ENCODE measurements at regions of chr11 and their contacts with region 1.

Region 1: GRCh38 chr11:207208-207862 is at the starts of genes BET1L and RIC8A:
- H3K4me3 ChIP-seq: peak within 1 kb of the TSS; percentile 83
- H3K27ac ChIP-seq: peak within 1 kb of the TSS; percentile 63
- H3K4me1 ChIP-seq: no peaks in the 10 kb centered on the region
- CTCF ChIP-seq: no peak; the same call in 1 of the 2 replicates

Region 2: GRCh38 chr11:221998-222789 is 14.9 kb after region 1 on chr11:
- CTCF ChIA-PET with region 1: no interaction called
- POLR2A ChIA-PET with region 1: interaction called, 22 read pairs
- H3K4me3 ChIP-seq: no peak overlapping the region
- H3K27ac ChIP-seq: no peak overlapping the region
- H3K4me1 ChIP-seq: no peaks in the 10 kb centered on the region
- CTCF ChIP-seq: no peak

Region 3: DNA sequence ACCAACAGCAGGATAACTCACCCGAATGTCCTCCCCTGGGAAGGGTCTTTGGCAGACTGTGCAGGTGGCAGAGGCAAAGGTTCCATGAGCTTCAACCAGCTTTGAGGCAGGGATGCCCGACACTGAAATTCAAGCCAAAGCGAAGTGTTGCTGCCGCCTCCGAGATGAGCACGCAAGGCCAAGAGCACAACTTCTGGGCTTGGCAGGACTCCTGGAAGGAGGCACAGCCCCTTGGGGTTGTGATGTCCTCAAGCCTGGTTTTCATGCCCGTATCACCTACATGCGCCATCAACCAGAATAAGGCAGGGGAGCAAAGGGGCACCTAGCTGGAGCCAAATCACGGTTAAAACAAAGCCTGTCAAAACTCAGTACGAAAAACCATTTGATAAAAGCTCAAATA is 23.1 kb after region 1 on chr11:
- CTCF ChIA-PET with region 1: interaction called, 5 read pairs
- POLR2A ChIA-PET with region 1: interaction called, 16 read pairs
- H3K4me3 ChIP-seq: no peak overlapping the region
- H3K27ac ChIP-seq: no peak overlapping the region
- H3K4me1 ChIP-seq: no peaks in the 10 kb centered on the region
- CTCF ChIP-seq: no peak

Region 4: DNA sequence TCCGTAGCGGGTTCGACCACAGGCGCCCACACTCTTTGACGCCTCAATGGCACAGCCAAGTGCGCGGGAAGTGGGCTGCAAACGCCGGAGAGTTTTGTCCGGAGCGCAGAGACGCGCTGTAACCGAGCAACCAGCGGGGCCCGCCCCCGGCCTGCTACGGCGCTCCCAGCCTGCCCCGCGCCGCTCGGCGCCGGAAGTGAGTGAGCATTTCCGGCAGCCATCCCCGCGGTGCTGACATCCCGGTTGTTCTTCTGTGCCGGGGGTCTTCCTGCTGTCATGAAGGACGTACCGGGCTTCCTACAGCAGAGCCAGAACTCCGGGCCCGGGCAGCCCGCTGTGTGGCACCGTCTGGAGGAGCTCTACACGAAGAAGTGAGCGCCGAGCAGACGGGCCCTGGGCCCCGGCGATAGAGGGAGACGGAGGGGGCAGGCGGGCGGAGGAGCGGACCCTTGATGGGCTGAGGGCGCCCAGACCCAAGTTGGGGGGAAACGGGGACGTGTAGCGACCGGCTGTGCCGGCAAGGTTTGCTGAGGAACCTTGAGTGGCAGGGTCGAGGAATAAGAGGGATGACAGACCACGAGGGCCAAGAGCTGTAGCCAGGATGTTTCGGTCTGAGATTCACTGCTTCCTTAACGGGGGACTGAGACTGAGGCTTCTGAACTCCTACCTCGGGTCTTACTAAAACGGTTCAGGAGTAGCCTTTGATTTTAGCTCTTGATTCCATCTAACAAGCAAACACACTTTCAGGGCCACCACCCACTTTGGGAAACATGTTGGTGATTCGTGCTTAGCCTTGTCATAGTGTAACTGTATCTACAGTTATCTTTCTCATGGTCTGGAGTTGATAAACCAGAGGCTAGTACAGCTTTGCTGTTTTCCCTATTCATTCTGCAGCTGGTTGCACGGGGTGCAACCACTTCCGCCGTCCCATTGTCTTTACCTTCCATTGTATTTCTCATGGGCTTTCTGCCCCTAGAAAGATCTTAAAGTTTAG is 29.7 kb after region 1 on chr11 and contains the start of gene PSMD13:
- CTCF ChIA-PET with region 1: interaction called, 5 read pairs
- POLR2A ChIA-PET with region 1: interaction called, 16 read pairs
- H3K4me3 ChIP-seq: peak within 1 kb of the TSS; percentile 93
- H3K27ac ChIP-seq: peak within 1 kb of the TSS; percentile 36; the same call in 1 of the 2 replicates
- H3K4me1 ChIP-seq: no peaks in the 10 kb centered on the region
- CTCF ChIP-seq: no peak